OCI-LY7 (cell line): ENCODE measurements at regions of chr12 and their contacts with region 1.

Region 1: DNA sequence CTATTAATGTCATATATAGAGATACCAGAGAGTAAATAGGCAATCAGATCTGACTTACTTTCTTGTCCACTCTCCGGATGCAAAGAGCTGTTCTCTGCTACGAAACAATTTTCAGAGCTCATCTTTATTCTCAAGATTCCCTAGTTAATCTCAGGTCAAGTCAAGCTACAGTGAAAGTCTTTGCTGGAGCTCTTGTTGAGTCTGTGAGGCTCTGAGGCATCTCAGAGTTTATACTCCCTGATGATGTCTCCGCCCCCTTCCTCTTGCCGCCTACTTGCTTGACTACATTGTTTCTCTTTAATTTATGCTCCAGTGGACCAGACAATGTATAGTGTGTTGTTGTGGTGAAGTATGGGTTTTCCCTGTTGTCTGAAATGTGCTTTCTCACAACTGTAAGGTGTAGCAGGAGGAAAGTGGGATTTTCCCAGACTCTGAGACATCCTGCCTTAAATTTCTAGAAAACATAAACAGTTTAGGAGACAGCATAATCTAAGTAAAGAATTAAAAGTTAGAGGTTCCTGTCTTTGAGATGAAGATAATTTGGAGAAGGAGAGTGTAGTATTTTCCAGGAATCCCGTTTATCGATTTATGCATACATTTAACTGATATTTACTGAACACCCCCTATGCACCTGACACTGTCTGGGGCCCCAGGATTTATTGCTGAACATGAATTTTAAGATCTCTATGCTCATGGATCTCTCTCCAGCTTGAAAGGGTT is at the start of gene CD69:
- DNase-seq: peak; percentile 83
- H3K4me3 ChIP-seq: peak within 1 kb of the TSS; percentile 67
- H3K27ac ChIP-seq: peak within 1 kb of the TSS; percentile 56
- H3K4me1 ChIP-seq: peaks cover 68% of the 10 kb centered on the region
- CTCF ChIP-seq: no peak
- total RNA-seq, gene CD69: 12.3 and 13.7 TPM in 2 replicates

Region 2: DNA sequence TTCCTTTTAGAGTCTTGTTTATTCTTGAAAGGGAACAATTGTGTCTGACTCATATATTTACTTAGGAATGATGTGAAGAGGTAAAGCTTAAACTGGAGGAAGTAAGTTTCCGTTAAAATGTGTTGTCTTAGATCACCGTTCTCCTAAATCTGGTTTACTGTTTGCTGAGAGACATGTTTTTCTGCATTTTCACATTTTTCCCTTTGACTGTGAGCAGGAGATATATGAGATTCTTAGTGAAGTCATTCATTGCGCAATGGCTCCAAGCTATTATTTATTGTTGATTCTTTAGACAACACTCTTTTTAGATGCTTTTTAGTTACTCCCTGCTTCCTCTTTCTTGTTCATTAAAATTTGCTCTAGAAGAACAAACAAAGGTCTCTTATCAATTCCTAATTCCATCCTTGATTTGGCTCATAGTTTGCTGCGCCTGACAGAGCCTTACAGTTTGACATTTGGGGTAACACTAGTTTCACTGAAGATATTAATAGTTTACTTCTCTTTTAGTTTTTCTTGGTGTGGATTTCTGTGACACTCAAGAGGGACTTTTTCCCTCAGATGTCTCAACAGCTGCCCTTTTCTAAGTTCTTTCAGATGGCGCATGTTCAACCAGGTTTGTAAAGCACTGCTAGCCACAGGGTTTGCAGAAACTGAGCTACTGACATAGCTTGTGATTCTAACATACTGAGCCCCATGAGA is 39.3 kb before region 1 on chr12:
- CTCF ChIA-PET with region 1: no interaction called
- POLR2A ChIA-PET with region 1: interaction called, 21 read pairs
- intact Hi-C with region 1: no loop called
- DNase-seq: peak; percentile 92
- H3K4me3 ChIP-seq: peak overlapping the region; percentile 42
- H3K27ac ChIP-seq: peak overlapping the region; percentile 99
- H3K4me1 ChIP-seq: peaks cover 100% of the 10 kb centered on the region
- CTCF ChIP-seq: no peak

Region 3: GRCh38 chr12:9731797-9732196 is 29.1 kb before region 1 on chr12:
- CTCF ChIA-PET with region 1: interaction called, 3 read pairs
- POLR2A ChIA-PET with region 1: interaction called, 40 read pairs
- intact Hi-C with region 1: no loop called
- DNase-seq: peak; percentile 77
- H3K4me3 ChIP-seq: peak overlapping the region; percentile 78
- H3K27ac ChIP-seq: peak overlapping the region; percentile 99
- H3K4me1 ChIP-seq: peaks cover 77% of the 10 kb centered on the region
- CTCF ChIP-seq: no peak

Region 4: GRCh38 chr12:9741726-9742125 is 19.1 kb before region 1 on chr12:
- CTCF ChIA-PET with region 1: interaction called, 5 read pairs
- POLR2A ChIA-PET with region 1: interaction called, 11 read pairs
- intact Hi-C with region 1: loop called (anchors 2 kb)
- DNase-seq: peak; percentile 86
- H3K4me3 ChIP-seq: peak overlapping the region; percentile 54
- H3K27ac ChIP-seq: peak overlapping the region; percentile 93
- H3K4me1 ChIP-seq: peaks cover 83% of the 10 kb centered on the region
- CTCF ChIP-seq: no peak

Region 5: DNA sequence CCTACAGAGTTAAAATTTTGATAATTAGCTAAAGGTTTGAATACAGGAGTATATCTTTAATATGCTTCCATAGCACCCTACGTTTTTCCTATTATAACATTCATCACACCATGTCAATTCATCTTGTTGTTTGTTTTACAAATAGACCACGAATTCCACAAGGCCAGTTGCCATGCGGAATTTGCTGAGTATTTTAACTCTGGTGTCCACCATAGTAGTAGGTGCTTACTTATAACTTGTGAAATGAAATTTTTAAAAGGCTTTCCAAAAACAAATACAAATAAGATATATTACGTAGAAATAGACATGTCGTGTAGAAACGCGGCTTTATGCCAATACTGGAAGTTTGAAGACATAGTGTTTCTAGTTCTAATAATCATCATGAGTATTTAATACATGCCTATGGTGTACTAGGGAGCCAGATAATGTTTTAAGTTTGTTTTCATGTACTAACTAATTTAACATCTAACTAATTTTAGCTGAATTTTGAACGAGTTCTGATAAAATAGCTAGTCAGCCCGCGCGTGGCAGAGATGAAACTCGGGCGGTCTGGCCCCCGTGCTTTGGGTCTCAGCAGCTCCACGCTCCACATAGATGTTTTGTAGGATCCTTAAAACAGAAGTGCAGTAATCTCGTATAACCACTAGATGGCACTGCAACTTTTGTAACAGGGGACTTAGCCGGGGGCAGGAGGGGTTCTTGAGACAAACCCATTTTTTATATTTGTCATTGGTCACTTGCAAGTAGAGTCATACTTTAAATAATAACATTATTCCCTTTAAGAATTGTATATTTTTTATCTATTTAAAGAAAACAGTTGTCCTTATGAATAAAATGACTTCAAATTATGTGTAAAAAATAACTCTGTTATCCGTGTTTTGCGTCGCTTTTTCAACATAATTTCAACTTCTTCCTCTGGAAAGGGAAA is 10.3 kb before region 1 on chr12:
- CTCF ChIA-PET with region 1: no interaction called
- POLR2A ChIA-PET with region 1: interaction called, 11 read pairs
- intact Hi-C with region 1: no loop called
- DNase-seq: peak; percentile 86
- H3K4me3 ChIP-seq: peak overlapping the region; percentile 26
- H3K27ac ChIP-seq: no peak overlapping the region
- H3K4me1 ChIP-seq: peaks cover 39% of the 10 kb centered on the region
- CTCF ChIP-seq: peak; percentile 80

Region 6: GRCh38 chr12:9773216-9773877 is 12.5 kb after region 1 on chr12:
- CTCF ChIA-PET with region 1: interaction called, 3 read pairs
- POLR2A ChIA-PET with region 1: interaction called, 11 read pairs
- intact Hi-C with region 1: no loop called
- DNase-seq: no peak
- H3K4me3 ChIP-seq: no peak overlapping the region
- H3K27ac ChIP-seq: no peak overlapping the region
- H3K4me1 ChIP-seq: peaks cover 12% of the 10 kb centered on the region
- CTCF ChIP-seq: no peak

Region 7: GRCh38 chr12:9797722-9798619 is 37.1 kb after region 1 on chr12:
- CTCF ChIA-PET with region 1: interaction called, 4 read pairs
- POLR2A ChIA-PET with region 1: interaction called, 25 read pairs
- intact Hi-C with region 1: loop called (anchors 2 kb)
- DNase-seq: peak; percentile 90
- H3K4me3 ChIP-seq: no peak overlapping the region
- H3K27ac ChIP-seq: no peak overlapping the region
- H3K4me1 ChIP-seq: peaks cover 26% of the 10 kb centered on the region
- CTCF ChIP-seq: peak; percentile 91